Tibial artery (tissue), 4 donors: ENCODE measurements at regions of chr3 and their contacts with region 1.

Region 1: DNA sequence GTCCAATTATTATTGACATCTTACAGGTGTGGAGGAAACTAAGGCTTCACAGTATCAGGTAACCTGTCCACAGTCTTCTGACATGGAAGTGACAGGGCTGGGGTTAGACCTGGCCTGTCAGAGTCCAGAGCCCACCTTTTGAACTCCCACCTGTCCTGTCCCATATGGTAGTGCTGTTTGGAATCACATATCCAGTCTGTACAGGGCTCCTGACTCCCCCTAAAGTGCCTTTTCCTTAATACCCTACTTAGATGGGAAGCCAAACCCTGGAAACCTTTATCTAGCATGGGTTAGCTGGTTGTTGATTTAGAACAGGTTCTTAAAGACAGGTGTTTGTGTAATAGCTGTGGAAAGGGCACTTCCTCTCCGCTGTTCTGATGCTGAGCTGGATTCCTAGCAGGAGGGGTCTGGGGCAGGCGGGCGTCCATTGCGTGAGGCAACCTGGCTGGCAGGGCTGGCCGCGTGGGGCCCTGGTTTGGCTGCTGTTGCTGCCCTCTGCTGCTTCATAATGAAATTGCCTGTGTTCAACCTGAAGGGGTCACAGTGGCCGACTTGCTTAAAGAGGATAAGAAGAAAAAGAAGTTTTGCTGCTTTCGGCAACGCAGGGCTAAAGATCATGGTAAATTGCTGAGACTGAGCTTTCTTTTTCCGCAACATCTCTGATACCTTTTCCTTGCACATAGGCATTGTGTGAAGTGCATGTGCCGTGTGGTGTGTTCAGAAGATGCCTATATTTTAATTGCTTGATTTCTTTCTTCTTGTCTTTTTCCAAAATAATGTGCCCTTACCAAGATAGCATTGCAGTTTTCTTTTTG is 136.2 kb downstream of the CHDH start:
- DNase-seq: peak; percentile 60 to 71
- H3K4me3 ChIP-seq: no peak overlapping the region
- H3K27ac ChIP-seq: no peak overlapping the region
- H3K4me1 ChIP-seq: no peaks in the 10 kb centered on the region
- H3K27me3 ChIP-seq: peaks cover 0 to 2% of the 10 kb centered on the region in 2 donors
- CTCF ChIP-seq: peak; percentile 77 to 79

Region 2: DNA sequence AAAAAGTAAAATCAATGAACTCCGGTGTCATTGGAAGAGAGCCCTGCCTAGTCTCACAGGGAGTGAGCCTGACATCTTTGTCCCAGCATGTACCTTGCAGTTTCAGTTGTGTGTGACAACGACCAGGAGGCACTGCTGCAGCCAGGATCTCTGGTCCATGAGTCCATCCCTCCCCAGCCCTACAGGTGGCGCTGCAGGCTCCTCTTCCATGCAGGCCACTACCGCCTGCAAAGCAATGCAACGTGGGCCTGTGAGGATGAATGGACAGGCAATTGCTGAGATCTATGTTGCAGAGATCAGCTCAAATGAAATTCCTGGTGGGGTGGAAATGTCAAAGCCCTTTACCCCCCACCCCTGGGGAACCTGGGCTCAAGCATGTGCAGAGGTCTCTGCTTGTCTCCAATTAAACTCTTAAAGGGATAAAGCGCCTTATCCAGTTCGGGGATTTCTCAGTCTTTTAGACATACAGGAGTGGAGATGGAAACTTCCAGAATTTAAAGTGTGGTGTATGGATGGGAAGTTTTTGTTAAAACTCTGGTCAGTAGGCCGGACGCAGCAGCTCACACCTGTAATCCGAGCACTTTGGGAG is 490.1 kb before region 1 on chr3:
- intact Hi-C with region 1: loop called (anchors 5 kb)
- DNase-seq: peak; percentile 80 to 89
- H3K4me3 ChIP-seq: no peak overlapping the region
- H3K27ac ChIP-seq: no peak overlapping the region
- H3K4me1 ChIP-seq: no peaks in the 10 kb centered on the region
- H3K27me3 ChIP-seq: no peaks in the 10 kb centered on the region
- CTCF ChIP-seq: peak; percentile 83 to 92

Region 3: DNA sequence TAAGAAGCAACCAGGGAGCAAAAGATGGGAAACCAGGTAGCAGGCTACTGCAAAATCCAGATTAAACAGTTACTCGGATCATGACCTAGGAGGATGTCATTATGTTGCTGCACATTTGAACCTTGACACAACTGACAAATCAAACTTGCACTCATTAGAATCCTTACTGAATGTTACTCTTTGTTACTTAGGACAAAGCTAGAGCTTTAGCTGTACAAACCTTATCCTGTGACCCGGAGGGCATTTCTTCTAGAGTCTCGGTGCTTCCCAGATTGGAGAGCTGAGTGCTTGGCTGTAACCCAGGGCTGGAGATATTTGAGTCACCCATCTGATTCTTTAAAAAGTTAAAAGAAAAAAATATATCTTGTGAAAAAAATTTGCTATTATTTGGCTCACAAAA is 406.1 kb before region 1 on chr3:
- intact Hi-C with region 1: loop called (anchors 5 kb)
- DNase-seq: no peak
- H3K4me3 ChIP-seq: no peak overlapping the region
- H3K27ac ChIP-seq: peak overlapping the region in 1 of 2 donors; percentile 12
- H3K4me1 ChIP-seq: peaks cover 0 to 20% (median 3%) of the 10 kb centered on the region in 4 donors
- H3K27me3 ChIP-seq: no peaks in the 10 kb centered on the region
- CTCF ChIP-seq: no peak

Region 4: GRCh38 chr3:53996141-53996861 is 286.2 kb after region 1 on chr3:
- intact Hi-C with region 1: no loop called
- DNase-seq: no peak
- H3K4me3 ChIP-seq: no peak overlapping the region
- H3K27ac ChIP-seq: no peak overlapping the region
- H3K4me1 ChIP-seq: no peaks in the 10 kb centered on the region
- H3K27me3 ChIP-seq: no peaks in the 10 kb centered on the region
- CTCF ChIP-seq: no peak